Right ventricle myocardium inferior (tissue), 1 donor: ENCODE measurements at regions of chr13 and their contacts with region 1.

Region 1: DNA sequence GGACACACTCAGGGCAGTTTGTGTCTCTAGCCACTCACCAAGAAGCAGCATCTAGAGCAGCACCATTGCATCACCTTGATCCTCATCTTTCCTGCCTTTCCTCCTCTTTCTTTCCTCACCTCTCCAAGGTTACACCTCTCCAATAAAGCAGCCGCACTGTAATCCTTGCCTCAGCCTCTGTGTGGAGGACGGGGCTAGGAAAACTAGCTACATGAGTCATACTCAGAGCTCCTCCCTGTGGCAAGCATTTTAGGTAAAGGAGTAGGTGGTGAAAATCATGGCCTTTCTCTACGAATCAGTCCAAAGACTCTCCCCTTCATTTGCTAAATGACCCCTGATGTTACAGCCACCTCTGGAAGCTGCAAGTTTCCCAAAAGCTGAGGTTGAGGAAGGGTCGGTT is 108.9 kb downstream of the DNAJC15 start:
- DNase-seq: no peak
- ATAC-seq: peak; percentile 49

Region 2: GRCh38 chr13:42594970-42595571 is 537.2 kb before region 1 on chr13:
- intact Hi-C with region 1: loop called (anchors 10 kb)
- DNase-seq: no peak
- ATAC-seq: peak; percentile 56

Region 3: GRCh38 chr13:42660333-42660965 is 471.8 kb before region 1 on chr13:
- intact Hi-C with region 1: loop called (anchors 5 kb)
- DNase-seq: no peak
- ATAC-seq: no peak

Region 4: GRCh38 chr13:42836930-42837690 is 295.1 kb before region 1 on chr13:
- intact Hi-C with region 1: loop called (anchors 5 kb)
- DNase-seq: no peak
- ATAC-seq: peak; percentile 16

Region 5: DNA sequence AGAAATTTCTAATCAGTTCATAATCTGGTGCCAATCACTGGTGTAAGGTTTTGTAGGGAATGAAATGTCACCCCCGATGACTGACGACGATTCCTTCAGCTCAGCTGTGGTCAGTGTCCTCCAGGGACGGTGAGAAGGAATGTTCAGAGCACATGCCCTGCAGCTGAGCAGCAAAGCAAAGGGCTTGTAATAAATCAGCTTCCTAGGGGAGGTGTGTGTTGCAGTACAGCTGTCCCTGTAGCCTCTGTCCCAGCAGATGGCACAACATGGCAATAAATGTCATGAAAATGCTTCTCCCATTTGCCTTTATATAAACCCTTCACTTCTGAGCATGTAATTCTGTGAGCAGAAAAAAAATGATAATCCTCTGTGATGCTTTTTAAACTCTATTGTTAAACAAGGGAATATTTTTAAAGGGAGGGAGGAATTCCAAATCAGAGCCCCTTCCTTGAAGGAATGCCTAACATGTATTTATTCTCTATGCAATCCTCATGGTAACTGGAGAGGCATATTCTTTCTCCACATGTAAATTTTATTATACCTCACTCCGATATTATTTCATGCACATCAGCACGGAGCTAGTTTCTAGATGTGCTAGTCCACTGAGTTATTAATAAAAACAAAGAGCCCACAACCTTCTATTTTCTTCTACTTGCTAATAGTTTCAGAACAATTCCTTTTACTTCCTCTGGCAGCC is 248.3 kb before region 1 on chr13:
- intact Hi-C with region 1: loop called (anchors 5 kb)
- DNase-seq: no peak
- ATAC-seq: peak; percentile 50

Region 6: DNA sequence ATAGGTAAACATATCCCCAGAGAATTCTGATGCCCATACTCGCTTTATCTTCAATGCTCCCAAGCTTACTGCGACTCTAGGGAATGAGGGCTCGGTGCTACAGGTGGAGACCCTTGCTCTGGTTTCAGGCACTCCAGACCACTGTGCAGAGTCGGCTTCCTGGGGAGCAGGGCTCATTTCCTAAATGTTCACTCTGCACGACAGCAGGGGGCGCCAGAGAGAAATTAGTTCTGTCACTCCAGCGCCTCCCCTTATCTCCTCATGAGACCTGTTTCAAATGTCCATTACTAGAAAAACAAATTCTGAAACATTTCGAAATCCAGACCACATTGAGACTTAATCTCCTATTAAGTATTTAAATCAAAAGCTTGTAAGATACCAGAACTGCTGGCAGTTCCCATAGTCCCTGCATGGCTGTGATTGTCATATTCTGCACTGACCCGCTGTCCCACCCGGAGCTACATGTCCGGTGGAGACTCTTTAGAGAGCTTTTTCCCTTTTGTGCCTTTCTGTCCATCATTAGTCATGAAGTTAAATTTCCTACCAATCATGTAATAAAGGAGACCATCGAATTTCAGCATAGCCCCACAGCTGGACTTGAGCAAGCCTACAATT is 162.6 kb before region 1 on chr13:
- intact Hi-C with region 1: loop called (anchors 2 kb)
- DNase-seq: peak; percentile 85
- ATAC-seq: peak; percentile 88